HCT116 (cell line): ENCODE measurements at regions of chr16 and their contacts with region 1.

Region 1: DNA sequence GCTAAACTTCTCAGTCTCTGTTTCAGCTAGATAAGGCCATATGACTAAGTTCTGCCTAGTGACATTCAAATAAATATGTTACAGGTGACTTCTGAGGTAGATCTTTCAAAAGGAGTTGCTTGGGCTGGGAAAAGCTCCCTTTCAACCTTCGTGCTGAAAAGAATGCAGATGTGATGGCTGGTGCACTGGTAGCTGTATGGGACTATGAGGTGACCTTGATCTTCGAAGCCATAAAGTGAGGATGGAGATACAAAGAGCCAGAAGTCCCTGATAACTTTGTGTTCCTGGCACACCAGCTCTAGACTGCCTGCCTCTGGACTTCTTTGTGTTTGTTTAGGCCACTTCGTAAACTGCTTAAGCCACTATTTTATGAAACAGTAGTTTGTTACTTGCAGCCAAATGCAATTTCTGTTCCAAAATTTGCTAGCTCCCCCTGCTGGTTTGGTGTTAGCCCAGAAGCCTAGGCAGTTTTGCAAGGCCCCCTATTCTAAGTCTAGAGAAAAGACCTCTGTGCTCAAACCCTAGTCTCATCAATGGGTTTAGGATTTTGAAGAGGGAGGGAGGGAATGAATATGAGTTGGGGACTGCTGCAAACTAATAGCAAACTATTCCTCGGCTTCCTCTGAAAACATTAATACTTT is 23.3 kb upstream of the ERCC4 start:
- DNase-seq: peak; percentile 36
- ATAC-seq: peak; percentile 90
- H3K4me3 ChIP-seq: no peak overlapping the region
- H3K27ac ChIP-seq: no peak overlapping the region
- H3K4me1 ChIP-seq: no peaks in the 10 kb centered on the region
- H3K27me3 ChIP-seq: peaks cover 38% of the 10 kb centered on the region
- CTCF ChIP-seq: peak; percentile 54 to 86 (median 82); a peak in 5 of 6 replicates
- POLR2A ChIP-seq: no peak
- RAD21 ChIP-seq: peak; percentile 55

Region 2: GRCh38 chr16:13866073-13866472 is 30.6 kb before region 1 on chr16:
- CTCF ChIA-PET with region 1: interaction called, 14 read pairs
- POLR2A ChIA-PET with region 1: no interaction called
- RAD21 ChIA-PET with region 1: interaction called in 1 of 2 experiments, 3 read pairs
- intact Hi-C with region 1: no loop called
- DNase-seq: peak; percentile 72
- ATAC-seq: peak; percentile 100
- H3K4me3 ChIP-seq: no peak overlapping the region
- H3K27ac ChIP-seq: no peak overlapping the region
- H3K4me1 ChIP-seq: no peaks in the 10 kb centered on the region
- H3K27me3 ChIP-seq: no peaks in the 10 kb centered on the region
- CTCF ChIP-seq: peak; percentile 58 to 93 (median 83); a peak in 5 of 6 replicates
- POLR2A ChIP-seq: no peak
- RAD21 ChIP-seq: peak; percentile 69

Region 3: GRCh38 chr16:13873835-13874438 is 22.7 kb before region 1 on chr16:
- CTCF ChIA-PET with region 1: interaction called, 15 read pairs
- POLR2A ChIA-PET with region 1: no interaction called
- RAD21 ChIA-PET with region 1: no interaction called
- intact Hi-C with region 1: no loop called
- DNase-seq: peak; percentile 28
- ATAC-seq: peak; percentile 83
- H3K4me3 ChIP-seq: no peak overlapping the region
- H3K27ac ChIP-seq: no peak overlapping the region
- H3K4me1 ChIP-seq: no peaks in the 10 kb centered on the region
- H3K27me3 ChIP-seq: no peaks in the 10 kb centered on the region
- CTCF ChIP-seq: peak; percentile 48 to 77 (median 66); a peak in 5 of 6 replicates
- POLR2A ChIP-seq: no peak
- RAD21 ChIP-seq: peak; percentile 69

Region 4: GRCh38 chr16:13883881-13884280 is 12.8 kb before region 1 on chr16:
- CTCF ChIA-PET with region 1: interaction called, 10 read pairs
- POLR2A ChIA-PET with region 1: no interaction called
- RAD21 ChIA-PET with region 1: no interaction called
- intact Hi-C with region 1: no loop called
- DNase-seq: no peak
- ATAC-seq: no peak
- H3K4me3 ChIP-seq: no peak overlapping the region
- H3K27ac ChIP-seq: no peak overlapping the region
- H3K4me1 ChIP-seq: no peaks in the 10 kb centered on the region
- H3K27me3 ChIP-seq: no peaks in the 10 kb centered on the region; the same call in 1 of the 2 replicates
- CTCF ChIP-seq: no peak
- POLR2A ChIP-seq: no peak
- RAD21 ChIP-seq: no peak